ENCODE measurements at regions of chr12 and their contacts with region 1.

Region 1: DNA sequence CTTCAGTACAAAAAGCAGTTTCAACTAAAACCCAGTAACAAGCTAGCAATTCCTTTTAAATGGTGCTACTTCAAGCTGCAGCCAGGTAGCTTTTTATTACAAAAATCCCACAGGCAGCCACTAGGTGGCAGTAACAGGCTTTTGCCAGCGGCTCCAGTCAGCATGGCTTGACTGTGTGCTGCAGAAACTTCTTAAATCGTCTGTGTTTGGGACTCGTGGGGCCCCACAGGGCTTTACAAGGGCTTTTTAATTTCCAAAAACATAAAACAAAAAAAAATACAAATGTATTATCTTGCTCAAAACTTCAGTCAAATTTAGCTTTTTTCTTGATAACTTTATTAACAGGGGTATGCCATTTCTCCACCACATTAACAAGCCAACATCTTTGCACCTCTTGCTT is 3.6 kb upstream of the CLEC4E start:
- DNase-seq: peak; percentile 32 to 81 (median 57)
- ATAC-seq: peak; percentile 72 to 80 (median 78)
- H3K4me3 ChIP-seq: no peak overlapping the region
- H3K4me3 Mint-ChIP-seq: peak overlapping the region in 1 of 3 donors; percentile 25
- H3K27ac ChIP-seq: no peak overlapping the region
- H3K27ac Mint-ChIP-seq: no peak overlapping the region
- H3K4me1 ChIP-seq: peaks cover 0 to 5% of the 10 kb centered on the region in 2 experiments
- H3K4me1 Mint-ChIP-seq: peaks cover 0 to 11% (median 9%) of the 10 kb centered on the region in 3 donors
- H3K27me3 ChIP-seq: no peaks in the 10 kb centered on the region
- H3K27me3 Mint-ChIP-seq: peaks cover 14 to 29% of the 10 kb centered on the region in 2 donors

Region 2: DNA sequence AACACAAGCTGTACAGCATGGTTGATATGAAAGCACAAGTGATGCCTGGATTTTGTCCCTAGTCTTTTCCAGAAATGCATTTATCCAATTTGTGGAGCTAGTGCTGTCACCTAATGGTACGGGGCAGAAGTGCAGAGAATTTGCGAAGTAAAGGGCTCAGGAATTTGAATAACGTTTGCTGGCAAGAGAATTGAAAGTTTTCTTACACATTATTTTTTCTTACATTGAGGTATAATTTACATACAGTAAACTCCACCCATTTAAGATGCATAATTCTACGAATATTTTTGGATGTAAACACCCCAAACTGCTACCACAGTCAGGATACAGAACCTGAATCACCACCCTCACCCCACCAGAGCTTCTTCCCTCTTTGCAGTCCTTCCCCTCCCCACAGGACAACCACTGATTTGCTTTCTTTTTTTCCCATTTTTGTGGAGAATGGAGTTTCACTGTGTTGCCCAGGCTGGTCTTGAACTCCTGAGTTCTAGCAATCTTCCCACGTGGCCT is 64.8 kb after region 1 on chr12:
- CTCF ChIA-PET with region 1: interaction called, 3 to 14 read pairs
- POLR2A ChIA-PET with region 1: no interaction called
- DNase-seq: peak in 1 of 35 experiments; percentile 34
- ATAC-seq: peak in 1 of 4 experiments; percentile 36
- H3K4me3 ChIP-seq: no peak overlapping the region
- H3K4me3 Mint-ChIP-seq: peak overlapping the region; percentile 47 to 75 (median 64)
- H3K27ac ChIP-seq: no peak overlapping the region
- H3K27ac Mint-ChIP-seq: no peak overlapping the region
- H3K4me1 ChIP-seq: peaks cover 0 to 4% of the 10 kb centered on the region in 2 experiments
- H3K4me1 Mint-ChIP-seq: peaks cover 11% of the 10 kb centered on the region in 3 donors
- H3K27me3 ChIP-seq: peaks cover 0 to 9% of the 10 kb centered on the region in 2 experiments
- H3K27me3 Mint-ChIP-seq: peaks cover 5 to 9% of the 10 kb centered on the region in 2 donors

Region 3: DNA sequence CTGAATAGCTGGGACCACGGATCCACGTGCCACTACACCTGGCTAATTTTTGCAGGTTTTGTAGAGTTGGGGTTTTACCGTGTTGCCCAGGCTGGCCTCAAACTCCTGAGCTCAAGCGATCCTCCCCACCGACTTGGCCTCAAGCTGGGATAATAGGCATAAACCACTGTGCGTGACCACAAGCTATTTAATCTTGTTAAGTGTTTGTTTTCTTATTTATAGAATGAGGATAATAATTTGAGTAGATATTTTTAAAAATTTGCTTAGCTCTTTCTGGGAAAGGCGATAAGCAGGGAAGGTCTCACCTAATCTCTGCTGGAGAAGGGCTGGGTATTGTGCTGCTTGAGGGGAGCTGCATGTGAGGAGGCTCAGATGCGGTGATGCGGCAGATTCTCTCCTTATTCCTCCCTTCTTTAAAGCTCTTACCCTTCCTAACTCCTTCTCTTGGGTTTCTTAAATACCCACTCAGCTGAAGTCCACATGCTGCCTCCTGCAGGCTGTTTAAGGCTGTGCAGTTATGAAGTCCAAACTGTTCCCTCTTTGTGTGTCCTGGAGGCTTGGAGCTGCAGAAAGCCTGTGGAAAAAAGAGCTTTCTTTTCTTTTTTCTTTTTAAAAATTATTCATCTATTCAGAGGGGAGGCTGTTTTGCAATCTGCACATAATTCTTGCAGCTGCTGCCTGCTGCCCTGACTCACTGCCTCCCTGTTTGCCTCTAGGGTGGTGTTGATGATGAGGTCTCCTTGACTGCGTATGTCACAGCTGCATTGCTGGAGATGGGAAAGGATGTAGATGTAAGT is 316.1 kb after region 1 on chr12:
- CTCF ChIA-PET with region 1: interaction called, 3 to 24 read pairs
- POLR2A ChIA-PET with region 1: no interaction called
- DNase-seq: peak in 28 of 35 experiments; percentile 0 to 61 (median 14)
- ATAC-seq: peak in 2 of 4 experiments; percentile 43 to 49
- H3K4me3 ChIP-seq: no peak overlapping the region
- H3K4me3 Mint-ChIP-seq: no peak overlapping the region
- H3K27ac ChIP-seq: no peak overlapping the region
- H3K27ac Mint-ChIP-seq: no peak overlapping the region
- H3K4me1 ChIP-seq: no peaks in the 10 kb centered on the region
- H3K4me1 Mint-ChIP-seq: no peaks in the 10 kb centered on the region
- H3K27me3 ChIP-seq: no peaks in the 10 kb centered on the region
- H3K27me3 Mint-ChIP-seq: peaks cover 0 to 3% of the 10 kb centered on the region in 2 donors

Region 4: DNA sequence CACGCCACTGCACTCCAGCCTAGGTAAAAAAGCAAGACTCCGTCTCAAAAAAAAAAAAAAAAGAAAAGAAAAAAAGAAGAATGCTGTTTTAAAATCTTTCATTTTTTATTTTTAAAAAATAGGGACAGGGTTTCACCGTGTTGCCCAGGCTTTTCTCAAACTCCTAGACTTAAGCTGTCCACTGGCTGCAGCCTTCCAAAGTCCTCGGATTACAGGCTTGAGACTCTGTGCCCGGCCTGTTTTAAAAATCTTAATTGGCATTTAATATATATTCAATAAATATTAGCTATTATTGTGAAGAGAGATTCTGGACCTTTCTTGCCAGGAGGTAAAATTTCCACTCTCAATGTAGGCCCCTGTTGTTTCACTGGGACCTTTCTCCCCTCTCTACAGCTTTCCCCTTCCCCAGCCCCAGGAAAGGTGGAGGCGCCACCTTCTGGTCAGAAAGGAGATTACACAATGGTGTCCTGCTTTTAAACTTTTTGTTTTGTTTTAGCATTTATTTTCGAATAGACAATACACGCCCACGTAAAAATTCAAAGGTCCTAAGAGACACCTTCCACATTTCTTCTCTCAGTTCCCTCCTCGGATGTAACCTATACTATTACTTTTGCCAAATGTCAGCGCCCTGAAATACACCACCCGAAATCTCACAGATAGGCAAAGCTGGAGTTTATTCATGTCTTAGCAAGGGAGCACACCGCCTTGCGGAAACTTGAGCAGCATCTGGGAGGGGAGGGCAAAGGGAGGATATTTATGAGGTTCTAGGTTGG is 346.2 kb after region 1 on chr12:
- CTCF ChIA-PET with region 1: interaction called in 1 of 2 experiments, 21 read pairs
- POLR2A ChIA-PET with region 1: no interaction called
- DNase-seq: peak in 34 of 35 experiments; percentile 14 to 79 (median 44)
- ATAC-seq: peak; percentile 81 to 84 (median 82)
- H3K4me3 ChIP-seq: peak overlapping the region; percentile 60 to 65
- H3K4me3 Mint-ChIP-seq: peak overlapping the region; percentile 60 to 90 (median 87)
- H3K27ac ChIP-seq: peak overlapping the region; percentile 23
- H3K27ac Mint-ChIP-seq: peak overlapping the region; percentile 76 to 79
- H3K4me1 ChIP-seq: peaks cover 0 to 3% of the 10 kb centered on the region in 2 experiments
- H3K4me1 Mint-ChIP-seq: peaks cover 0 to 5% (median 4%) of the 10 kb centered on the region in 3 donors
- H3K27me3 ChIP-seq: peaks cover 0 to 4% of the 10 kb centered on the region in 2 experiments
- H3K27me3 Mint-ChIP-seq: no peaks in the 10 kb centered on the region